ENCODE measurements at regions of chr18 and their contacts with region 1.

Region 1: GRCh38 chr18:62982600-62983251 is 267.4 kb downstream of the PHLPP1 start:
- DNase-seq: peak; percentile 7
- ATAC-seq: peak; percentile 88
- H3K4me3 ChIP-seq: no peak overlapping the region
- H3K27ac ChIP-seq: no peak overlapping the region
- H3K4me1 ChIP-seq: no peaks in the 10 kb centered on the region
- H3K27me3 ChIP-seq: no peaks in the 10 kb centered on the region
- CTCF ChIP-seq: peak; percentile 75 to 82 (median 78)
- EP300 ChIP-seq: no peak
- POLR2A ChIP-seq: no peak
- RAD21 ChIP-seq: peak; percentile 98

Region 2: GRCh38 chr18:62186774-62187542 is 795.8 kb before region 1 on chr18 and contains the starts of genes PIGN and RELCH:
- CTCF ChIA-PET with region 1: interaction called, 3 read pairs
- POLR2A ChIA-PET with region 1: no interaction called
- RAD21 ChIA-PET with region 1: no interaction called
- SMC1A ChIA-PET with region 1: no interaction called
- in situ Hi-C with region 1: no loop called
- intact Hi-C with region 1: loop called (anchors 10 kb)
- DNase-seq: peak; percentile 92
- ATAC-seq: peak; percentile 90
- H3K4me3 ChIP-seq: peak within 1 kb of the TSS; percentile 99
- H3K27ac ChIP-seq: peak within 1 kb of the TSS; percentile 91
- H3K4me1 ChIP-seq: peaks cover 3% of the 10 kb centered on the region
- H3K27me3 ChIP-seq: no peaks in the 10 kb centered on the region
- CTCF ChIP-seq: no peak
- EP300 ChIP-seq: no peak
- POLR2A ChIP-seq: peak; percentile 98
- RAD21 ChIP-seq: no peak
- polyA plus RNA-seq, gene PIGN: 6.9 to 12.3 TPM
- polyA plus RNA-seq, gene RELCH: 3.1 to 3.4 TPM

Region 3: DNA sequence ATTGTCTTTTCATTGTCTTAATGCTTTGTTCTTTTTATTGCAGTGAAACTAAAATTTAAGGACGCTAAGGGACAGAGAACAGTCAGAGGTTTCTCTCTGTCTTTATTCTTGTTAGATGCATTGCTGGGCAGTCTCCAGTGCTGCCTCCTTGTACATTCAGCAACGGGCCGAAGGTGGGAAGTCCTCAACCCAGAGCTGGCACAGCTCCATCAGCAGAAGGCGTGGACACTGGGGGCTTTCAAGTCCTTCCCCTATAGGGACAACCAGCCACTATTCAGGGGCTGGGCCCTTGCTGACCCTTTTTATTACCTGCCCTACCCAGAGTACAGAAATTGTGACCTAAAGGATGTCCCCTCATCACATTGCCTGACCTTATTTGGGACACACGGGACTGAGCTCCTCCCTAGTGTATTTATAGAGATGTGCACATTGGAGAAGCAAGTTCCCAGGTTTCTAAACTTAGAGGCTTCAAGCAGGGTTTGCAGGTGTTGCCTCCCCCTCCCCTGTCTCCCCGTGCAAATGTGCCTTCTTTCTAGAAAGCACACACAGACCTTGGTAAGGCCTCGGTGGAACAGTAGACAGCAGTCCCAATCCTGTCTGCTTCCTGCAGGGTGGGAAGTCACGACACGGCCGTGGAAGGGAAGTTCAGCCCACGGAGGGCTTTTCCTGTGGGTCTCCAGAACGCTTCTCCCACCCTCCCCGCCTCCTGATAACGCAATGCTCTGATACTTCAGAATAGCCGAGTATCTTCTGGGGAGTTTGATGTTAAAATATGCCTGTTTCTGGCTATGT is 391.7 kb before region 1 on chr18:
- CTCF ChIA-PET with region 1: interaction called, 66 read pairs
- POLR2A ChIA-PET with region 1: no interaction called
- RAD21 ChIA-PET with region 1: interaction called, 5 read pairs
- SMC1A ChIA-PET with region 1: interaction called, 22 read pairs
- in situ Hi-C with region 1: no loop called
- intact Hi-C with region 1: loop called (anchors 1 kb)
- DNase-seq: no peak
- ATAC-seq: no peak
- H3K4me3 ChIP-seq: no peak overlapping the region
- H3K27ac ChIP-seq: no peak overlapping the region
- H3K4me1 ChIP-seq: peaks cover 12% of the 10 kb centered on the region
- H3K27me3 ChIP-seq: peaks cover 0 to 2% of the 10 kb centered on the region in 2 experiments; a peak in 1 of 4 replicates
- CTCF ChIP-seq: no peak
- EP300 ChIP-seq: no peak
- POLR2A ChIP-seq: no peak
- RAD21 ChIP-seq: no peak

Region 4: GRCh38 chr18:62637807-62638687 is 344.7 kb before region 1 on chr18:
- CTCF ChIA-PET with region 1: interaction called, 42 read pairs
- POLR2A ChIA-PET with region 1: no interaction called
- RAD21 ChIA-PET with region 1: interaction called, 13 read pairs
- SMC1A ChIA-PET with region 1: interaction called, 11 read pairs
- in situ Hi-C with region 1: no loop called
- intact Hi-C with region 1: loop called (anchors 1 kb)
- DNase-seq: no peak
- ATAC-seq: peak; percentile 98
- H3K4me3 ChIP-seq: no peak overlapping the region
- H3K27ac ChIP-seq: no peak overlapping the region
- H3K4me1 ChIP-seq: 0 out of 2 replicates have a peak, but pooled peaks cover 6% of the 10 kb centered on the region
- H3K27me3 ChIP-seq: no peaks in the 10 kb centered on the region
- CTCF ChIP-seq: peak; percentile 74 to 84 (median 82)
- EP300 ChIP-seq: no peak
- POLR2A ChIP-seq: no peak
- RAD21 ChIP-seq: peak; percentile 65

Region 5: DNA sequence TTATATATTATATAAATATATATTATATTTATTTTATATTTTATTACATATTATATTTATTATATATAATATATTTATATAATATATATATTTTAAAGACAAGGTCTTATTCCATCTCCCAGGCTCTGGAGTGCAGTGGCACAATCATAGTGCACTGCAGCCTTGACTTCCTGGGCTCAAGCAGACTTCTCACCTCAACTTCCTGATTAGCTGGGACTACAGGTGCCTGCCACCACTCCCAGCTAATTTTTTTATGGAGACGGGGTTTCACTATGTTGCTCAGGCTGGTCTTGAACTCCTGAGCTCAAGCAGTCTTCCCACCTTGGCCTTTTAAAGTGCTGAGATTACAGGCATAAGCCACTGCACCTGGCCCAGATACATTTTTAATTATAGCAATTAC is 157.3 kb before region 1 on chr18:
- CTCF ChIA-PET with region 1: no interaction called
- POLR2A ChIA-PET with region 1: no interaction called
- RAD21 ChIA-PET with region 1: no interaction called
- SMC1A ChIA-PET with region 1: no interaction called
- in situ Hi-C with region 1: no loop called
- intact Hi-C with region 1: no loop called
- DNase-seq: no peak
- ATAC-seq: no peak
- H3K4me3 ChIP-seq: no peak overlapping the region
- H3K27ac ChIP-seq: no peak overlapping the region
- H3K4me1 ChIP-seq: peaks cover 4% of the 10 kb centered on the region
- H3K27me3 ChIP-seq: no peaks in the 10 kb centered on the region
- CTCF ChIP-seq: no peak
- EP300 ChIP-seq: no peak
- POLR2A ChIP-seq: no peak
- RAD21 ChIP-seq: no peak

Region 6: GRCh38 chr18:63025251-63026090 is 42.7 kb after region 1 on chr18:
- CTCF ChIA-PET with region 1: no interaction called
- POLR2A ChIA-PET with region 1: no interaction called
- RAD21 ChIA-PET with region 1: no interaction called
- SMC1A ChIA-PET with region 1: no interaction called
- in situ Hi-C with region 1: no loop called
- intact Hi-C with region 1: no loop called
- DNase-seq: no peak
- ATAC-seq: peak; percentile 59; the same call in 2 of the 3 replicates
- H3K4me3 ChIP-seq: no peak overlapping the region
- H3K27ac ChIP-seq: no peak overlapping the region
- H3K4me1 ChIP-seq: no peaks in the 10 kb centered on the region
- H3K27me3 ChIP-seq: no peaks in the 10 kb centered on the region
- CTCF ChIP-seq: peak; percentile 36 to 59 (median 40); a peak in 4 of 6 replicates
- EP300 ChIP-seq: no peak
- POLR2A ChIP-seq: no peak
- RAD21 ChIP-seq: peak; percentile 72

Measured in GM12878 (cell line).